K562 (cell line): ENCODE measurements at regions of chr1 and their contacts with region 1.

Region 1: GRCh38 chr1:39701049-39701439 is 9.8 kb upstream of the HPCAL4 start:
- DNase-seq: no peak
- ATAC-seq: no peak
- H3K4me3 ChIP-seq: no peak overlapping the region
- H3K27ac ChIP-seq: no peak overlapping the region
- H3K4me1 ChIP-seq: peaks cover 5 to 12% of the 10 kb centered on the region in 2 experiments; a peak in 3 of 5 replicates
- H3K27me3 ChIP-seq: peaks cover 9 to 12% of the 10 kb centered on the region in 2 experiments; a peak in 4 of 5 replicates
- CTCF ChIP-seq: no peak
- EP300 ChIP-seq: no peak
- POLR2A ChIP-seq: no peak
- RAD21 ChIP-seq: no peak

Region 2: GRCh38 chr1:39711104-39711965 is 10.3 kb after region 1 on chr1:
- CTCF ChIA-PET with region 1: interaction called, 3 read pairs
- POLR2A ChIA-PET with region 1: interaction called, 25 read pairs
- in situ Hi-C with region 1: no loop called
- intact Hi-C with region 1: loop called (anchors 1 kb)
- DNase-seq: peak; percentile 87 to 96 (median 88)
- ATAC-seq: peak; percentile 98
- H3K4me3 ChIP-seq: no peak overlapping the region
- H3K27ac ChIP-seq: peak overlapping the region; percentile 70
- H3K4me1 ChIP-seq: peaks cover 22 to 24% of the 10 kb centered on the region in 2 experiments; a peak in 4 of 5 replicates
- H3K27me3 ChIP-seq: no peaks in the 10 kb centered on the region
- CTCF ChIP-seq: peak; percentile 76 to 90 (median 88)
- EP300 ChIP-seq: peak; percentile 97
- POLR2A ChIP-seq: no peak
- RAD21 ChIP-seq: peak in 1 of 2 experiments; percentile 54; a peak in 3 of 4 replicates

Region 3: DNA sequence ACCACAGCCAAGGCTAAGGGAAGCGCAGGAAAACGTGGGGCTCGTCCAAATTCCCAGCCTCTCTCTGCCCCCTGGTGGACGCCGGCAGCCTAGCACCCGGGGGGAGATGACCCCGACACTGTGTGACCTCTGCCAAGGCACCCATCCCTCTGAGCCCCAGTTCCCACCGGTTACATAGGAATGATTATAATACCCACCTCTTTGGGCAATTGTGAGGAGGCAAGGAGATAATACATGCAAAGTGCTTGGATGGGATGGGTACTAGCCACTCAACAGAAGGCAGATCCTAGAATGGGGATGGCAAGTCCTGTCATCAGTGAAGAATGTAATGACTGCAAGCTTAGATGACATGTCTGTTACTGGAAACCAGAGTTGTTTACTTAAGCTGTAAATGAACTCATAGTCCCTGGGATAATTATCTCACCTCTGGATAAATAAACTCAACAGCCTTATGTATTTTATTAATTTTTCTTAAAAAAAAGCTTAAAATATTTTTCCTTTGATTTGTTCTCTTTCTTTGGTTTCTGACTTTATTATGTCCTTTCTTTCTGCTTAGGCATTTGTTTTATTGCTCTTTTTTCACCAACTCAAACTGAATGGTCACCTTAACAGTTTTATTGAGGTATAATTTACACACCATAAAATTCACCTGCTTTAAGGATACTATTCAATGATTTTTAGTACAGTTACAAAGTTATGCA is 98.9 kb after region 1 on chr1:
- CTCF ChIA-PET with region 1: interaction called, 18 read pairs
- POLR2A ChIA-PET with region 1: no interaction called
- in situ Hi-C with region 1: no loop called
- intact Hi-C with region 1: loop called (anchors 1 kb)
- DNase-seq: peak; percentile 86 to 89 (median 88)
- ATAC-seq: peak; percentile 94
- H3K4me3 ChIP-seq: no peak overlapping the region
- H3K27ac ChIP-seq: peak overlapping the region; percentile 74
- H3K4me1 ChIP-seq: peaks cover 9 to 10% of the 10 kb centered on the region in 2 experiments; a peak in 4 of 5 replicates
- H3K27me3 ChIP-seq: no peaks in the 10 kb centered on the region
- CTCF ChIP-seq: peak; percentile 87 to 93 (median 92)
- EP300 ChIP-seq: no peak
- POLR2A ChIP-seq: no peak
- RAD21 ChIP-seq: peak; percentile 85 to 94

Region 4: DNA sequence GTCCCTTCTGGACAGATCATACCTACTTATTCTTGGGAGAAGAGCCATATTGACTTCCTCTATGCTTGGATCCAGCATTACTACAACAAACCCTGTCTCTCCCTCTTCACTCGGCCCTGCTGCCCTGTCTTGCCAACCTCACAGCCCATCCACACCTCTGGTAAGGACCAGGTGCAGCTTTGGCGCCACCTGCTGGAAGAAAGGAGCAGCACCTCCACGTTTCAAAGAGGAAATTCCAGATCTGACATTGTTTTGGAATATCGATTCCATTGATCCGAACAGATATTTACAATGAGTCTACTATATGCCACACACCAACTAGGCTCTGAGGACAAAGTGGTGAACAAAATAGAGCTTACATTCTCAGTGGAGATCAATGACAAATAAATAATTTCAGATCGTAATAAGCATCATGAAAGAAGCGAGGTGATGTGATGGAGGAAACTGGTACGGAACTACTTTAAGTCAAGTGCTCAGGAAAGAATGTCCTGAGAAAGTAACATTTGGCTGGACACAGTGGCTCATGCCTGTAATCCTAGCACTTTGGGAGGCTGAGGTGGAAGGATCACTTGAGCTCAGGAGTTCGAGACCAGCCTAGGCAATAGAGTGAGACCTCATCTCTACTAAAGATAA is 272.6 kb after region 1 on chr1:
- CTCF ChIA-PET with region 1: no interaction called
- POLR2A ChIA-PET with region 1: no interaction called
- in situ Hi-C with region 1: no loop called
- intact Hi-C with region 1: loop called (anchors 5 kb)
- DNase-seq: peak; percentile 74 to 87 (median 82)
- ATAC-seq: peak; percentile 86
- H3K4me3 ChIP-seq: no peak overlapping the region
- H3K27ac ChIP-seq: no peak overlapping the region
- H3K4me1 ChIP-seq: peaks cover 4% of the 10 kb centered on the region in 2 experiments; a peak in 4 of 5 replicates
- H3K27me3 ChIP-seq: peaks cover 4 to 8% of the 10 kb centered on the region in 2 experiments; a peak in 2 of 5 replicates
- CTCF ChIP-seq: peak; percentile 96 to 99 (median 98)
- EP300 ChIP-seq: no peak
- POLR2A ChIP-seq: no peak
- RAD21 ChIP-seq: peak; percentile 97 to 99